ENCODE measurements at regions of chr5 and their contacts with region 1.

Region 1: GRCh38 chr5:81105261-81105877 is 127.8 kb upstream of the CKMT2 start:
- DNase-seq: no peak
- H3K4me3 Mint-ChIP-seq: no peak overlapping the region
- H3K27ac Mint-ChIP-seq: no peak overlapping the region
- H3K4me1 Mint-ChIP-seq: peaks cover 23% of the 10 kb centered on the region
- H3K27me3 Mint-ChIP-seq: no peaks in the 10 kb centered on the region

Region 2: DNA sequence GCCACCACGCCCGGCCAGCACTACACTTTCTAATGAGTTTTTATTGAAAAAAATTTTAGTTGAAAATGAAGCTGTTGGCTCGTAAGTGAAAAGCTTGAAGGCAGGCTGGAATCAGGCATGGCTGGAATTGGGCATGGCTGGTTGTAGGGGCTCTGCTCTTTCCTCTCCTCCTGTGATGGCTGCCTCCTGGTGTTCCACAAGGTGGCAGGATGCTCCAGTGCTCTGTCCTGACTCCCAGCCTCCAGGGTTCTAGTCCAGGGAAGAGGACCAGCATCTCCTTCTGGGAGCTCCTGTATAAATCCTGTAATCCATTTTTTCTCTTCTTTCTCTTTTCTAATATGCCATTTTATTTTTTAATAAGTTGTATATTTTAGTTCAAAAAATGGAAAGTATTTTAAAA is 393.4 kb before region 1 on chr5:
- CTCF ChIA-PET with region 1: interaction called, 6 read pairs
- POLR2A ChIA-PET with region 1: no interaction called
- intact Hi-C with region 1: loop called (anchors 1 kb)
- DNase-seq: peak; percentile 24
- H3K4me3 Mint-ChIP-seq: no peak overlapping the region
- H3K27ac Mint-ChIP-seq: no peak overlapping the region
- H3K4me1 Mint-ChIP-seq: peaks cover 19% of the 10 kb centered on the region
- H3K27me3 Mint-ChIP-seq: no peaks in the 10 kb centered on the region

Region 3: GRCh38 chr5:80935811-80936385 is 169.5 kb before region 1 on chr5:
- CTCF ChIA-PET with region 1: interaction called, 14 read pairs
- POLR2A ChIA-PET with region 1: no interaction called
- intact Hi-C with region 1: no loop called
- DNase-seq: peak; percentile 21
- H3K4me3 Mint-ChIP-seq: no peak overlapping the region
- H3K27ac Mint-ChIP-seq: no peak overlapping the region
- H3K4me1 Mint-ChIP-seq: peaks cover 7% of the 10 kb centered on the region
- H3K27me3 Mint-ChIP-seq: no peaks in the 10 kb centered on the region

Region 4: GRCh38 chr5:80967500-80968181 is 137.7 kb before region 1 on chr5:
- CTCF ChIA-PET with region 1: interaction called, 10 read pairs
- POLR2A ChIA-PET with region 1: no interaction called
- intact Hi-C with region 1: no loop called
- DNase-seq: no peak
- H3K4me3 Mint-ChIP-seq: no peak overlapping the region
- H3K27ac Mint-ChIP-seq: peak overlapping the region; percentile 9
- H3K4me1 Mint-ChIP-seq: peaks cover 61% of the 10 kb centered on the region
- H3K27me3 Mint-ChIP-seq: no peaks in the 10 kb centered on the region

Region 5: GRCh38 chr5:81035522-81035921 is 69.8 kb before region 1 on chr5:
- CTCF ChIA-PET with region 1: no interaction called
- POLR2A ChIA-PET with region 1: no interaction called
- intact Hi-C with region 1: no loop called
- DNase-seq: no peak
- H3K4me3 Mint-ChIP-seq: no peak overlapping the region
- H3K27ac Mint-ChIP-seq: no peak overlapping the region
- H3K4me1 Mint-ChIP-seq: peaks cover 4% of the 10 kb centered on the region
- H3K27me3 Mint-ChIP-seq: no peaks in the 10 kb centered on the region

Region 6: GRCh38 chr5:81125959-81126358 is 20.6 kb after region 1 on chr5:
- CTCF ChIA-PET with region 1: interaction called, 10 read pairs
- POLR2A ChIA-PET with region 1: no interaction called
- intact Hi-C with region 1: no loop called
- DNase-seq: no peak
- H3K4me3 Mint-ChIP-seq: no peak overlapping the region
- H3K27ac Mint-ChIP-seq: no peak overlapping the region
- H3K4me1 Mint-ChIP-seq: peaks cover 8% of the 10 kb centered on the region
- H3K27me3 Mint-ChIP-seq: no peaks in the 10 kb centered on the region

Region 7: DNA sequence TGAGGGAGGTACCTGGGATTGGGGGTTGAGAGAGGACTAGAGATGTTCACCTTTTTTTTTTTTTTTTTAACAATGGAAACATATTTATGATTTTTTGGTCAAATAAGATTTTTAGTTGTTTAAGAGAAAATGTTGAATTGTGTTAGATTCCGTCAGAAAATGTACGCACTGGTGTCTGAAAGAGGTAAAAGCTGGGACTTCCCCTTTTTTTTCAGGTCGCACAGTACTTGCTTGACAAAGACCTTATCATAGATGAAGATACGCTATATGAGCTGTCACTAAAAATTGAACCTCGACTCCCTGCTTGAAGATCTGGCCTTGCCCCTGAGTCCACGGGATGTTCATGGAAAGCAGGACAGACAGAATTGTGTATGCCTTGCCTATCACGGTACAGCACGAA is 120.1 kb after region 1 on chr5:
- CTCF ChIA-PET with region 1: no interaction called
- POLR2A ChIA-PET with region 1: no interaction called
- intact Hi-C with region 1: no loop called
- DNase-seq: no peak
- H3K4me3 Mint-ChIP-seq: no peak overlapping the region
- H3K27ac Mint-ChIP-seq: no peak overlapping the region
- H3K4me1 Mint-ChIP-seq: no peaks in the 10 kb centered on the region
- H3K27me3 Mint-ChIP-seq: no peaks in the 10 kb centered on the region

Region 8: DNA sequence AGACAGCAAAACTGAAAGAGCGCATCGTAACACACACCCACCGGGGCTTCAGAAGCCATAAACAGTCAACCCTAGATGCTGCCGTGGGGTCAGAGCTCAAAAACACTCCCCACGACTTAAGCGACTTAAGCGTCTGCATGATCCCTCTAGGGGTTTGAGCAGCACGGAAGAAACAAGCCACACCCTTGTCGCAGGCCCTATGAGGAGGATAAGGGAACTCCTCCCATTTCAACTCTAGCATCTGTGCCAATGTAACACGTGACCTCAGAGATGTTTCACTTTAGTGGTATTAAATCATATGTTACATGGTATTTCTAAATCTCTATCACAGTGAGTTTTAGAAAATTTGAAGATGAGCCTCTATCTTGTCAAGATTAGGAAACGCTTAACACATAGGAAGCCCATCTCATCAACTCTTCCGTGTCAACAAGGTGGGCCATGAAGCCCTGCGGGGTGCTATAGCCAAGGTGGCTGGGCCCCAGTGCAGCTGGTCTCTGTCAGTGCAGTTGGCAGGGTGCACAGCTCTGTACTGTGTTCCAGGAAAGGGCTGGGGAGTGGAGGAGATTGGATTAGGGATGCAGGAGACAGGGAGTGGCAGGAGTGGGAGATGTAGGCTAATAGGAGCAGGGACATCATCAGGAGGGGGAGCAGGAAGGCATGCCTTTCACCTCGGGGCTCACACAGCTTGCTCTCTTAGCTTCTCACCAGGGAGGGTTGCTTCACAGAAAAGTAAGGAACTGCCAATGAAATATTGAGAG is 229.1 kb after region 1 on chr5:
- CTCF ChIA-PET with region 1: no interaction called
- POLR2A ChIA-PET with region 1: no interaction called
- intact Hi-C with region 1: no loop called
- DNase-seq: no peak
- H3K4me3 Mint-ChIP-seq: no peak overlapping the region
- H3K27ac Mint-ChIP-seq: no peak overlapping the region
- H3K4me1 Mint-ChIP-seq: no peaks in the 10 kb centered on the region
- H3K27me3 Mint-ChIP-seq: no peaks in the 10 kb centered on the region

Region 9: DNA sequence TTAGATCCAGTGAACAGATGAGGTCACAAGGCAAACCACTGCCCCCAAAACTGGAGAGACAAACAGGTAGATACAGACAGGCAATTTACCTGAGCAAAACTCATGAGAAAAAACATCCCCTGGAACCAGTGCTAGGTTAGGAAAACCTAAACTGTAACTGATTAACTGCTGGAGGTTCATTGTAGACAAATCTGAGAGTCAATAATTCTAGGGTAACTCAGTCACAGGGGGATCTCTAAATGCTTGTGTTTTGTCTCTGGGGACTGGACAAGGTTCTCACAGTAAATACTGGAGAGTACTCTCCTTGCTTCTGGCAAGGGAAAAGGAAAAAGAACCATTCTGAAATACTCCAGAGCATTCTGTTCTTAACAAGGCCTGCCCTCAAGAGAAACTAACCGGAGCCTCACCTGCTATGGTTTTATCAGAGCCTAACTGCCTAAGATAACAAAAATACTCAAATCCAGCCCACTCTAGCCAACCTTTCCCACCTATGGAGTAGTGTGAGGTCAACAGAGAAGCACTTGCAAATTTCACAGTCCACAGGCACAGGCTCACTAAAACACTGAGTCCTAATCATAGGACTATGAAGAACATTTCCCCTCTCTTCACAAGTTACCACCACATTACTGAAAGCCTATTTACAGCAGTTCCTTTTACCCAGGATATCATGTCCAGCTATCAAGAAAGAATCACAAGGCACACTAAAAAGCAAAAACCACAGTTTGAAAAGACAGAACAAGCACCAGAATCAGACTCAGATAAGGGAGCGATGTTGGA is 428.4 kb after region 1 on chr5:
- CTCF ChIA-PET with region 1: no interaction called
- POLR2A ChIA-PET with region 1: no interaction called
- intact Hi-C with region 1: no loop called
- DNase-seq: no peak
- H3K4me3 Mint-ChIP-seq: no peak overlapping the region
- H3K27ac Mint-ChIP-seq: no peak overlapping the region
- H3K4me1 Mint-ChIP-seq: peaks cover 32% of the 10 kb centered on the region
- H3K27me3 Mint-ChIP-seq: no peaks in the 10 kb centered on the region

Measured in activated CD4-positive, alpha-beta memory T cell treated with anti-CD3 and anti-CD28 coated beads for 36 hours (primary cell).